Endothelial cell of umbilical vein (primary cell): ENCODE measurements at regions of chr7 and their contacts with region 1.

Region 1: GRCh38 chr7:130758429-130759056 is 24.5 kb upstream of the KLF14 start:
- DNase-seq: peak; percentile 58
- H3K4me3 ChIP-seq: no peak overlapping the region
- H3K27ac ChIP-seq: no peak overlapping the region
- H3K4me1 ChIP-seq: no peaks in the 10 kb centered on the region
- H3K27me3 ChIP-seq: peaks cover 11 to 17% of the 10 kb centered on the region in 2 experiments
- CTCF ChIP-seq: peak; percentile 40 to 45
- POLR2A ChIP-seq: no peak

Region 2: DNA sequence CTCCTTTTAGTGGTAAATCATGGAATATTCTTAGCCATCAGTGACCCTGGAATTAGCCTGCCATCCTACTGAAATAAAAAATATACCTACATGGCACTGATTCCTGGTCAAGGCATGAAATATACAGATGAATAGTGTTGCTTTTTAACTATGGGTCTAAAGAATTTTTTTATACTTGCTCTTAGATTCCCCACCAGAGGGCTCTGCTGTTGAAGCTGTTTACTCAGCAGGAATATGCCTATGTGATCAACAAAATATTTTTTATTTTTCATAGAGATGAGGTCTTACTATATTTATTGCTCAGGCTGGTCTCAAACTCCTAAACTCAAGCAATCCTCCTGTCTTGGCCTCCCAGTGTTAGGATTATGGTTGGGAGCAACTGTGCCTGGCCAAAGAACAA is 720.8 kb before region 1 on chr7:
- CTCF ChIA-PET with region 1: interaction called, 13 read pairs
- POLR2A ChIA-PET with region 1: no interaction called
- dilution Hi-C with region 1: no loop called
- intact Hi-C with region 1: no loop called
- DNase-seq: no peak
- H3K4me3 ChIP-seq: no peak overlapping the region
- H3K27ac ChIP-seq: no peak overlapping the region
- H3K4me1 ChIP-seq: no peaks in the 10 kb centered on the region
- H3K27me3 ChIP-seq: no peaks in the 10 kb centered on the region
- CTCF ChIP-seq: peak in 1 of 2 donors; percentile 28
- POLR2A ChIP-seq: no peak

Region 3: DNA sequence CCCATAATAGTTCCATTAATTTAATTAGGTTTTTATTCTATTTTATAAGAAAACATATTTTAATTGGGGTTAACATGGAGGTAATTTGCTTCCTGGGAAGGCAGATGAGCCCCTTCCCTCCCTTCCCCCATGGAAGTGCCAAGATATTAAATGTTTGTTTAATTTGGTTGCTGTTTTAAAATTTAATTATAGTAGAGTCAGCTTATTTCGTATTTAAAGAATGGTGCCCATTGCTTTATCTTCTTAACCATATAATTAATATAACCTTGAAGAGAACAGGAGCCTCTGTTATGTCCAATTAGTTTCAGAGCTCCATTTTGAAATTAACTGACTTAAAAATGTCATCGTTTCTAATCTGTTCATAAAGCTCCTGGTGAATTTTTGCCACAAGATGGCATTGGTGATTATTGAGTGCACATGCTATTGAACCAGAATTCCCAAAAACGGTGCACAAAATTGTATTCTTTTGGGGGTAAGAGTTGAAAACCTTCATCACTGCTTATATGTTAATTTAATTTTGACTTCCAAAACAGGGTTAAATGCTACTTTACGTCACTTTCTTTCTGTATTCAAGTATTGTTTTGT is 662.2 kb before region 1 on chr7:
- CTCF ChIA-PET with region 1: interaction called, 12 read pairs
- POLR2A ChIA-PET with region 1: no interaction called
- dilution Hi-C with region 1: no loop called
- intact Hi-C with region 1: no loop called
- DNase-seq: no peak
- H3K4me3 ChIP-seq: no peak overlapping the region
- H3K27ac ChIP-seq: no peak overlapping the region
- H3K4me1 ChIP-seq: no peaks in the 10 kb centered on the region
- H3K27me3 ChIP-seq: no peaks in the 10 kb centered on the region
- CTCF ChIP-seq: no peak
- POLR2A ChIP-seq: no peak

Region 4: GRCh38 chr7:130650611-130651120 is 107.9 kb before region 1 on chr7:
- CTCF ChIA-PET with region 1: no interaction called
- POLR2A ChIA-PET with region 1: no interaction called
- dilution Hi-C with region 1: no loop called
- intact Hi-C with region 1: no loop called
- DNase-seq: no peak
- H3K4me3 ChIP-seq: no peak overlapping the region
- H3K27ac ChIP-seq: no peak overlapping the region
- H3K4me1 ChIP-seq: no peaks in the 10 kb centered on the region
- H3K27me3 ChIP-seq: no peaks in the 10 kb centered on the region
- CTCF ChIP-seq: no peak
- POLR2A ChIP-seq: no peak

Region 5: DNA sequence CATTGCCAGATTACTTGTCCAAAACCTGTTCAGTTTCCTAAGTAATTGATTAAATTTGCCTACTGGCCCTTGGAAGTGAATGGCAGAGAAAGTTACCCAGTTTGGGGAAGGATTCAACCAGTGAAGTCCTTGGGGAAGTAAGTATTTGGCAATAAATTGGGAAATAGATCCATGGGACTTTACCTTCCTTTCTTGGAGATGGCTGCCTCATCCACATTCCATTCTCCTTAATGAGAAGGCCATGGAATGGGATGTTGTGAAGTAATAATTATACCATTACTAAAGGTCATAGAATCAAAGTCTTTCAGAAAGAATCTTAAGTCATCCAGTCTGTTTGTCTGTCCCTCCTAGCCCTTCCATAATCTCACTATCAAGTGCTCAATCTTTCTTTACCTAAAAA is 85.5 kb before region 1 on chr7:
- CTCF ChIA-PET with region 1: no interaction called
- POLR2A ChIA-PET with region 1: no interaction called
- dilution Hi-C with region 1: no loop called
- intact Hi-C with region 1: no loop called
- DNase-seq: no peak
- H3K4me3 ChIP-seq: no peak overlapping the region
- H3K27ac ChIP-seq: no peak overlapping the region
- H3K4me1 ChIP-seq: no peaks in the 10 kb centered on the region
- H3K27me3 ChIP-seq: peaks cover 2 to 14% of the 10 kb centered on the region in 2 experiments
- CTCF ChIP-seq: no peak
- POLR2A ChIP-seq: no peak

Region 6: DNA sequence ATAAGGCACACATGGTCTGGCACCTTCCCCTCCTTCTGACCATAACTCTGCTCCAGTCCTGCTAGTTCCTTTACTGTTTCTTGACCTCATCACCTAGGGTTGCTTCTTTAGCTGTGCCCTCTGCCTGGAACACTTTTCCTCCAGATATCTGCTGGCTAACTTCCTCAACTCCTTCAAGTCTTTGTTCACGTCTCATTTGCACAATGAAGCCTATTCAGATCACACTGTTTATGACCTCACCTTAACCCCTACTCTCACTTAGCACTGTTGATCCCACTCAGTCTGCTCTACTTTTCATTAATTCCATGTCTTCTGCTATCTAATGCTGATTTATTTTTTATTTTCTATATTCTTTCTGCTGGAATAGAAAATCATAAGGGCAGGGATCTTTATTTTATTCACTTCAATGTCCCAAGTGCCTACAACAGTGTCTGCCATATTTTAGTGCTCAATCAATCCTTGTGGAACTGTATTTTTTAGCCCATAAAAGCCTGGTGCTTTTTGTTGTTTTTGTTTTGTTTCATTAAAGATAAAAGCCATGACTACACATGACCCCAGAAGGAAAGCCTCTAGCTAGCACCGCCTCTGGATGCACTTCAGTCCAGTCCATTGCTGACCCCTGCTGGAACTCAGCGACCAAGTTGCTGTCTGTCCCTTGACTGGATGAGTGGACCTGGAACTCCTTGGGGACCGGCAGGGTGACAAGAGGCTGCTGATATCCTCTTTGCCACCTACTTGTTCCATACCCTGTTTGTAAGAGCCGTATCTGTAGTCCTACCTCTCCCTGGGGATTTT is 36.9 kb before region 1 on chr7:
- CTCF ChIA-PET with region 1: interaction called, 13 read pairs
- POLR2A ChIA-PET with region 1: no interaction called
- dilution Hi-C with region 1: no loop called
- intact Hi-C with region 1: no loop called
- DNase-seq: peak; percentile 71
- H3K4me3 ChIP-seq: no peak overlapping the region
- H3K27ac ChIP-seq: no peak overlapping the region
- H3K4me1 ChIP-seq: no peaks in the 10 kb centered on the region
- H3K27me3 ChIP-seq: peaks cover 21 to 28% of the 10 kb centered on the region in 2 experiments
- CTCF ChIP-seq: peak; percentile 55 to 67
- POLR2A ChIP-seq: no peak

Region 7: DNA sequence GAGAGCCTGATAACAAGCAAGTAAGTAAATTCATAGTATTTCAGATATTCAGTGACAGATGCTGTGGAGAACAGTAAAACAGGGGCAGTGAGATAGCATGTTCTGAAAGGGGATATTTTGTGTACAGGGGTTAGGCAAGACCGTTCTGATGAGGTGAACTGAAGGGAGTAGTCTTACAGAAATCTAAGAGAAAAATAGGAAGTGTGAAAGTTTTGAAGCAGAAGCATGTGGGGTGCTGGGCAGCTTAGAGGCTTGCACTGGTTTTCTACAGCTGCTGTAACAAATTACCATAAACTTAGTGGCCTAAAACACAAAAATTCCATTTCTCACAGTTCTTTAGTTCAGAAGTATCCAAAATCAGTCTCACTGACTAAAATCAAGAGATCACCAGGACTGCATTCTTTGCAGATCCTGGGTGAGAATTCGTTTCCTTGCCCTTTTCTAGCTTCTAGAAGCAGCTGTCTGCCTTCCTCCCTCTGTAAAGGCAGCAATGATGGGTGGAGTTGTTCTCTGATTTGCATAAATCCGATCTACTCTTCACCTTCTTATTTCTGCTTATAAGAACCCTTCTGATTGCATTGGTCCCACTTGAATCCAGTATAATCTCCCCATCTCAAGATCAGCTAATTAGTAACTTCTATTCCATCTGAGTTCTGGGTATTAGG is 17.1 kb before region 1 on chr7:
- CTCF ChIA-PET with region 1: interaction called, 27 read pairs
- POLR2A ChIA-PET with region 1: interaction called, 3 read pairs
- dilution Hi-C with region 1: no loop called
- intact Hi-C with region 1: no loop called
- DNase-seq: no peak
- H3K4me3 ChIP-seq: no peak overlapping the region
- H3K27ac ChIP-seq: no peak overlapping the region
- H3K4me1 ChIP-seq: no peaks in the 10 kb centered on the region
- H3K27me3 ChIP-seq: peaks cover 35 to 86% of the 10 kb centered on the region in 2 experiments
- CTCF ChIP-seq: no peak
- POLR2A ChIP-seq: no peak

Region 8: GRCh38 chr7:130793855-130794618 is 35.5 kb after region 1 on chr7:
- CTCF ChIA-PET with region 1: interaction called, 15 read pairs
- POLR2A ChIA-PET with region 1: no interaction called
- dilution Hi-C with region 1: no loop called
- intact Hi-C with region 1: no loop called
- DNase-seq: peak; percentile 6
- H3K4me3 ChIP-seq: no peak overlapping the region
- H3K27ac ChIP-seq: no peak overlapping the region
- H3K4me1 ChIP-seq: no peaks in the 10 kb centered on the region
- H3K27me3 ChIP-seq: peaks cover 3 to 4% of the 10 kb centered on the region in 2 experiments
- CTCF ChIP-seq: peak in 1 of 2 donors; percentile 5
- POLR2A ChIP-seq: no peak